PC-3 (cell line): ENCODE measurements at regions of chr17 and their contacts with region 1.

Region 1: DNA sequence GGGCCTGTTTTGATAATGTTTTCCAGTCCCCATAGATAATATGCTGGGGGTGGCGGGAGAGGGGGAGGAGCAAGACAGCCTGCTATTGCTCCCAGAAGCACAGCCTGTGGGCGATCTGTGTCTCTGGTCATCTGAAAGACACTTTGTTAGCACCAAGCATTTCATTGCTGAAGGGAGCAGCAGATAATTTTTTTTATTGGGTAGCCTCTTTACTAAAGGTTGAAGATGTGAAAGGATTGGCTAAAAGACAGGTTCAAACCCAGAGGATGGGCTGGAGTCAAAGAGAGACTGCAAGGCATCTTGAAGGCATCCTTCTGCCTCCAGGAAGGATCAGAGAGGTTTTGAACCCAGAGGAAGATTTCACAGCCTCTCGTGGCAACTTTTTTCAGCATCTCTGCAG is 60.6 kb downstream of the C17orf67 start:
- DNase-seq: no peak
- ATAC-seq: no peak
- H3K4me3 ChIP-seq: no peak overlapping the region
- H3K27ac ChIP-seq: peak overlapping the region; percentile 86
- H3K4me1 ChIP-seq: peaks cover 32% of the 10 kb centered on the region
- H3K27me3 ChIP-seq: no peaks in the 10 kb centered on the region
- CTCF ChIP-seq: no peak

Region 2: GRCh38 chr17:56392051-56392673 is 381.0 kb before region 1 on chr17:
- CTCF ChIA-PET with region 1: no interaction called
- POLR2A ChIA-PET with region 1: no interaction called
- intact Hi-C with region 1: no loop called
- DNase-seq: no peak
- ATAC-seq: no peak
- H3K4me3 ChIP-seq: no peak overlapping the region
- H3K27ac ChIP-seq: no peak overlapping the region
- H3K4me1 ChIP-seq: no peaks in the 10 kb centered on the region
- H3K27me3 ChIP-seq: peaks cover 19% of the 10 kb centered on the region; the same call in 1 of the 2 replicates
- CTCF ChIP-seq: no peak

Region 3: DNA sequence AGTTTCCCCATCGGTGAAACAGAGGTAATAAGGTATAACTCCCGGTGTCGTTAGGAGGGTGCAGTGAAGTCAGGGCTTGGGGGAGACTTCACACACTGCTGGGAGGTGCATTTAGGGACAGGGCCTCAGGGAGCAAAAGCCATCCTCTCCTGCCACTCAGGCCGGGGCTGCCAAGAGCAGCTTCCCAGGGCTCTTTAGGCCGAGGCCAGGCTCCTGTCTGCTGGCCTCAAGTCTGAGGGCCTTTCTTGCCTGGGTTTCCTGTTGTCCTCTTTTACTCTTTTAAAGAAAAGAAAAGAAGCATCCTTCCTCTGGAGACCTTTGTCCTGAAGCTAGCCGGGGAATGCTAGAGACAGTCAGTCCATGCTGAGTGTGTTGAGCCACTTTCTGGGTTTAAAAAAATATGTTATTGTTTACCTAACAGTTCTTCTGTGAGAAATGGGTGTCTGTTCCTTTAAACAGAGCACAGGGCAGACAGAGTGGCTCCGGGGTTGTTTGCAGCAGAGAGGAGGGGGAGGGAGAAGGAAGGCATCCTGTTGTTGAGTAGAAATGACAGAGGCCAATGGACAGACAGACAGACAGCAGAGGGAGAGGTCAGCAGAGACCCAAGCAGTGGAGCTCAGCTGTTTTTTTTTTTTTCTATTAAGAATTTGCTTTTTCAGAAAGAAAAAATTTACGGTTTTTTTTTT is 18.5 kb before region 1 on chr17:
- CTCF ChIA-PET with region 1: interaction called, 5 read pairs
- POLR2A ChIA-PET with region 1: interaction called, 17 read pairs
- intact Hi-C with region 1: loop called (anchors 1 kb)
- DNase-seq: peak; percentile 40
- ATAC-seq: peak; percentile 69
- H3K4me3 ChIP-seq: no peak overlapping the region
- H3K27ac ChIP-seq: no peak overlapping the region
- H3K4me1 ChIP-seq: peaks cover 19% of the 10 kb centered on the region
- H3K27me3 ChIP-seq: no peaks in the 10 kb centered on the region
- CTCF ChIP-seq: no peak

Region 4: GRCh38 chr17:56761387-56761786 is 11.7 kb before region 1 on chr17:
- CTCF ChIA-PET with region 1: no interaction called
- POLR2A ChIA-PET with region 1: no interaction called
- intact Hi-C with region 1: loop called (anchors 1 kb)
- DNase-seq: peak; percentile 33
- ATAC-seq: peak; percentile 58
- H3K4me3 ChIP-seq: no peak overlapping the region
- H3K27ac ChIP-seq: no peak overlapping the region
- H3K4me1 ChIP-seq: peaks cover 18% of the 10 kb centered on the region
- H3K27me3 ChIP-seq: no peaks in the 10 kb centered on the region
- CTCF ChIP-seq: no peak

Region 5: DNA sequence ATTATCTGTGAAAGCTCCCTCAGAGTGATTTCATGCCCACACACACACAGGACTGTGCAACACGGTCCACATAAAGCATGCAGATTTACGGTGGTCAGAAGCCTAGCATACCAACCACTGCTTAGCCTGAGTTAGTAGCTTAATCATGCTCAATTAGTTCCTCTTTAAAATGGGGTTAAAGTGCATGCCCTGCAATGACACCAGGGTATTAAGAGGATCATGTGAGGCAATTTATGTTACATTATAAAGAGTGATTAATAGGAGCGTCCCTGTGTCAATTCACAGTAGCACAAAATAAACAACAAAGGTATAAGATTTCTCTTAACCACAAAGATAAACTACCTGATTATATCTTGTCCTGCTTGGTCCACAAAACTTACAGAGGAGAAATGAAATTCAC is 20.8 kb after region 1 on chr17:
- CTCF ChIA-PET with region 1: no interaction called
- POLR2A ChIA-PET with region 1: no interaction called
- intact Hi-C with region 1: no loop called
- DNase-seq: peak; percentile 23
- ATAC-seq: peak; percentile 44
- H3K4me3 ChIP-seq: no peak overlapping the region
- H3K27ac ChIP-seq: no peak overlapping the region
- H3K4me1 ChIP-seq: peaks cover 23% of the 10 kb centered on the region
- H3K27me3 ChIP-seq: no peaks in the 10 kb centered on the region
- CTCF ChIP-seq: no peak